Heart right ventricle (tissue), 16 donors: ENCODE measurements at regions of chr2 and their contacts with region 1.

Region 1: DNA sequence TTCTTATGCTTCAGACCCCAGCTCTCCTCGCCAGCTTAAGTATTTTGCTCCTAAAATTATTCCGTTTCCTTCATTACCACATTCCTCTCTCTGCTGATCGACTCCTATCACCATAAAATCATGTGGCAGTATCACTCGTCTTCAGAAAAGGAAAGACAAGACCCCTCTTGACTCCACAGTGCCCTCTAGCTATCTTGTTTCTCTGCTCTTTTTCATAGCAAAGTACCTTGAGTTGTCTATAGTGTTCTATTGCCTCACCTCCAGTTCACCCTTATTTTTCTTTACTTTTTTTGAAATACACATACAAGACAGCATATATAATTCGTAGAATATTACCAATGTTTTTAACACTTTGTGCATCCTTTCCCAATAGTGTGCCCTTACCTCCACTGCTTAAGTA is 273.2 kb upstream of the SIX3 start:
- DNase-seq: no peak
- ATAC-seq: no peak
- H3K4me3 ChIP-seq: no peak overlapping the region
- H3K27ac ChIP-seq: no peak overlapping the region
- H3K4me1 ChIP-seq: no peaks in the 10 kb centered on the region
- H3K27me3 ChIP-seq: no peaks in the 10 kb centered on the region
- CTCF ChIP-seq: peak in 6 of 9 donors; percentile 15 to 42 (median 24)

Region 2: GRCh38 chr2:44578421-44579135 is 89.8 kb before region 1 on chr2:
- intact Hi-C with region 1: loop called in 1 of 10 experiments (anchors 10 kb)
- DNase-seq: no peak
- ATAC-seq: peak in 1 of 8 donors; percentile 76
- H3K4me3 ChIP-seq: peak overlapping the region in 1 of 10 donors; percentile 1
- H3K27ac ChIP-seq: peak overlapping the region in 2 of 10 donors; percentile 17 to 52
- H3K4me1 ChIP-seq: peaks cover 0 to 19% (median 0%) of the 10 kb centered on the region in 9 donors
- H3K27me3 ChIP-seq: no peaks in the 10 kb centered on the region
- CTCF ChIP-seq: no peak